ENCODE measurements at regions of chr3 and their contacts with region 1.

Region 1: DNA sequence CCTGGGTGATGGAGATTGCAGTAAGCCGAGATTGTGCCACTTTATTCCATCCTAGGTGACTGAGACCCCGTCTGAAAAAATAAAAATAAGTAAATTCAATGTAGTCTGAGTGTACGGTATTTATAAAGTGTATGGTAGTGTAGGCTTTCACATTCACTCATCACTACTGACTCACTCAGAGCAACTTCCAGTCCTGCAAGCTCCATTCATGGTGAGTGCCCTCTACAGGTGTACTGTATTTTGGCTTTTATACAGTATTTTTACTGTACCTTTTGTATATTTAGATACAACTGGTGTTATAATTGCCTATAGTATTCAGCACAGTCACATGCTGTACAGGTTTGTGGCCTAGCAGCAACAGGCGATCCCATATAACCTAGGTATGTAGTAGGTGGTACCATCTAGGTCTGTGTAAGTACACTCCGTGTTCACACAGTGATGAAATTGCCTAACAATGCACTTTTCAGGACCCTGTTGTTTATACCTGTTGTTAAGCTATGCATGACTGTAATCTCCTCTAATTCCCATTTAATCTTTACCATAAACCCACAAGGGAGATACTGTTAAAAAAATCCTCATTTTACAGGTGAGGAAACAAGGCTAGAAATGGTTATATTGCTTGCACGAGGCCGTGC is 19.3 kb downstream of the CACNA1D start:
- DNase-seq: peak; percentile 70
- ATAC-seq: peak; percentile 85
- H3K4me3 ChIP-seq: no peak overlapping the region
- H3K27ac ChIP-seq: no peak overlapping the region
- H3K4me1 ChIP-seq: peaks cover 5% of the 10 kb centered on the region; the same call in 1 of the 2 replicates
- H3K27me3 ChIP-seq: peaks cover 44% of the 10 kb centered on the region
- CTCF ChIP-seq: peak; percentile 72

Region 2: DNA sequence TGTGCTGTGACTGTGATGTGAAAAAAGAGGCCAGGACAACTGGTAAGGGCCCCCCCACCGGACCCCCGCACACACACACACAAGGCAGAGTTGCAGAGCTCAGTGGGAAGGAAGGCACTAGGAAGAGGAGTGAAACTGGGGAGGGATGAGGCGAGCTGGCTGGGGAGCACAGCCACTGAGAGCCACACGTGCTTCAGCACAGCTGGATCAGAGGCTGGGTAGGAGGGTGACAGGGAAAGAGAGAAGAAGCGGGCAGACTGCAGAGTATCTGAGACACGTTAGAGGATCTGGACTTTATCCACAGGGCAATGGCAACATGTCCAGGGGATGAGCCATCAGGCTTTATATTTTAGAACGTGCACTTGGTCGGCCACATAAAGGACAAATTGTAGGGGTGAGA is 219.8 kb before region 1 on chr3:
- CTCF ChIA-PET with region 1: no interaction called
- POLR2A ChIA-PET with region 1: no interaction called
- intact Hi-C with region 1: loop called (anchors 10 kb)
- DNase-seq: no peak
- ATAC-seq: no peak
- H3K4me3 ChIP-seq: no peak overlapping the region
- H3K27ac ChIP-seq: no peak overlapping the region
- H3K4me1 ChIP-seq: no peaks in the 10 kb centered on the region
- H3K27me3 ChIP-seq: no peaks in the 10 kb centered on the region
- CTCF ChIP-seq: no peak

Region 3: GRCh38 chr3:53375019-53375418 is 138.7 kb before region 1 on chr3:
- CTCF ChIA-PET with region 1: no interaction called
- POLR2A ChIA-PET with region 1: interaction called, 3 read pairs
- intact Hi-C with region 1: loop called (anchors 2 kb)
- DNase-seq: peak; percentile 74
- ATAC-seq: peak; percentile 97
- H3K4me3 ChIP-seq: no peak overlapping the region
- H3K27ac ChIP-seq: no peak overlapping the region
- H3K4me1 ChIP-seq: no peaks in the 10 kb centered on the region
- H3K27me3 ChIP-seq: peaks cover 23% of the 10 kb centered on the region
- CTCF ChIP-seq: peak; percentile 90

Measured in PC-3 (cell line).